GM12878 (cell line): ENCODE measurements at regions of chr11 and their contacts with region 1.

Region 1: GRCh38 chr11:44095506-44096394 is at the start of gene EXT2:
- DNase-seq: no peak
- ATAC-seq: peak; percentile 96
- H3K4me3 ChIP-seq: peak within 1 kb of the TSS; percentile 85
- H3K27ac ChIP-seq: no peak within 1 kb of the TSS
- H3K4me1 ChIP-seq: no peaks in the 10 kb centered on the region; the same call in 1 of the 2 replicates
- H3K27me3 ChIP-seq: no peaks in the 10 kb centered on the region; a peak in 1 of 4 replicates
- CTCF ChIP-seq: peak; percentile 87 to 93 (median 92)
- EP300 ChIP-seq: no peak
- POLR2A ChIP-seq: peak; percentile 77
- RAD21 ChIP-seq: no peak
- polyA plus RNA-seq, gene EXT2: 3.8 to 6.6 TPM

Region 2: GRCh38 chr11:44065841-44066731 is 29.7 kb before region 1 on chr11 and contains the start of gene ACCS:
- CTCF ChIA-PET with region 1: interaction called, 77 read pairs
- POLR2A ChIA-PET with region 1: interaction called, 3 read pairs
- RAD21 ChIA-PET with region 1: interaction called, 3 read pairs
- SMC1A ChIA-PET with region 1: no interaction called
- in situ Hi-C with region 1: no loop called
- intact Hi-C with region 1: no loop called
- DNase-seq: peak; percentile 70
- ATAC-seq: peak; percentile 97
- H3K4me3 ChIP-seq: peak within 1 kb of the TSS; percentile 80
- H3K27ac ChIP-seq: peak within 1 kb of the TSS; percentile 82
- H3K4me1 ChIP-seq: peaks cover 11% of the 10 kb centered on the region
- H3K27me3 ChIP-seq: no peaks in the 10 kb centered on the region
- CTCF ChIP-seq: peak; percentile 85 to 86 (median 86)
- EP300 ChIP-seq: no peak
- POLR2A ChIP-seq: peak; percentile 86
- RAD21 ChIP-seq: no peak
- polyA plus RNA-seq, gene ACCS: 4.8 to 5.4 TPM

Region 3: DNA sequence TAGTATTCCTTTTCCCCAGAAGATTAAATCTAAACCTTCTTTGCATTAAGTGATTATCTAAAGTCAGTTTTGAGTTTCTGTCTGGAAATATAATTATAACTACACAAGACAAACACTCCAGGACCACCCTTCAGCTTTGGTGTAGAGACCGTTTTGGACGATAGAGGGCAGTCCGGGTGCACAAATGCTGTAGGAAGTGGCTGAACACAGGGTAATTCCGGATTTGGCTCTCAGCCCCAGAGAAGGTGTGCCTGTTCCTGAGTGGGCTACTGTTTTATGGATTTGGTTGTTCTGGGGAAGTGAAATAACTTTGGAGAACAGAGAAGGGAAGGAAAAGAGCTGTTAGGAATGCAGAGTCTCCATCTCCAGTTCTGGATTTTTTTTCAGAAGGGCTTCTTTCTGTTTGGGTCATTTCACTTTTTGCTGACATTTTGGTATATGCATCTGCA is 14.5 kb after region 1 on chr11:
- CTCF ChIA-PET with region 1: interaction called, 107 read pairs
- POLR2A ChIA-PET with region 1: interaction called, 3 read pairs
- RAD21 ChIA-PET with region 1: interaction called, 5 read pairs
- SMC1A ChIA-PET with region 1: interaction called, 36 read pairs
- in situ Hi-C with region 1: no loop called
- intact Hi-C with region 1: no loop called
- DNase-seq: no peak
- ATAC-seq: peak; percentile 98
- H3K4me3 ChIP-seq: no peak overlapping the region
- H3K27ac ChIP-seq: 0 out of 2 replicates have a peak overlapping the region, but pooled peaks have one; percentile 22
- H3K4me1 ChIP-seq: peaks cover 8% of the 10 kb centered on the region
- H3K27me3 ChIP-seq: no peaks in the 10 kb centered on the region
- CTCF ChIP-seq: peak; percentile 85 to 94 (median 90)
- EP300 ChIP-seq: no peak
- POLR2A ChIP-seq: no peak
- RAD21 ChIP-seq: peak; percentile 90

Region 4: GRCh38 chr11:44133335-44133946 is 37.7 kb after region 1 on chr11:
- CTCF ChIA-PET with region 1: interaction called, 21 read pairs
- POLR2A ChIA-PET with region 1: no interaction called
- RAD21 ChIA-PET with region 1: interaction called, 5 read pairs
- SMC1A ChIA-PET with region 1: no interaction called
- in situ Hi-C with region 1: no loop called
- intact Hi-C with region 1: no loop called
- DNase-seq: no peak
- ATAC-seq: peak; percentile 55; the same call in 2 of the 3 replicates
- H3K4me3 ChIP-seq: no peak overlapping the region
- H3K27ac ChIP-seq: no peak overlapping the region
- H3K4me1 ChIP-seq: no peaks in the 10 kb centered on the region
- H3K27me3 ChIP-seq: no peaks in the 10 kb centered on the region
- CTCF ChIP-seq: peak; percentile 52 to 63 (median 59)
- EP300 ChIP-seq: no peak
- POLR2A ChIP-seq: no peak
- RAD21 ChIP-seq: peak; percentile 52

Region 5: GRCh38 chr11:44171518-44171917 is 75.8 kb after region 1 on chr11:
- CTCF ChIA-PET with region 1: no interaction called
- POLR2A ChIA-PET with region 1: no interaction called
- RAD21 ChIA-PET with region 1: no interaction called
- SMC1A ChIA-PET with region 1: no interaction called
- in situ Hi-C with region 1: no loop called
- intact Hi-C with region 1: no loop called
- DNase-seq: no peak
- ATAC-seq: no peak
- H3K4me3 ChIP-seq: no peak overlapping the region
- H3K27ac ChIP-seq: no peak overlapping the region
- H3K4me1 ChIP-seq: no peaks in the 10 kb centered on the region
- H3K27me3 ChIP-seq: no peaks in the 10 kb centered on the region
- CTCF ChIP-seq: no peak
- EP300 ChIP-seq: no peak
- POLR2A ChIP-seq: no peak
- RAD21 ChIP-seq: no peak

Region 6: DNA sequence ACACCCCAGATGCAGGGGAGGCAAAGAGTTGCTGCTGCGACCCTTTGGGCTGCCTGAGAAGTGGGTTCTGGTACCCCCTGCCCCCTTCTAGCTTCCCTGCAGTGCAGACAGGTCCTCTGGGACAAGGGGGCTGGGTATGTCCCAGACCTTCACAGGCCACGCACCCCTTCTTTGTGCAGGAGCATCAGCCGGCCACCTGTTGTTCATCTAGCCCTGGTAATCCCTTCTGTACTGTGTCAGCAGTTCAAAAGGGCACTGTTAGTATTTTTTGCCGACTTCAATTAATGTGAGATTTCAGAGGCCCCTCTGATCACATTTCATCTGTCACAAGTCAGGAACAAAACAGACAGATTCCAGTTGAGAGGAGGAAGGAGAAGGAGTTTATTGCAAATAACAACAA is 164.3 kb after region 1 on chr11:
- CTCF ChIA-PET with region 1: no interaction called
- POLR2A ChIA-PET with region 1: no interaction called
- RAD21 ChIA-PET with region 1: no interaction called
- SMC1A ChIA-PET with region 1: no interaction called
- in situ Hi-C with region 1: no loop called
- intact Hi-C with region 1: no loop called
- DNase-seq: no peak
- ATAC-seq: no peak
- H3K4me3 ChIP-seq: no peak overlapping the region
- H3K27ac ChIP-seq: no peak overlapping the region
- H3K4me1 ChIP-seq: peaks cover 4% of the 10 kb centered on the region
- H3K27me3 ChIP-seq: no peaks in the 10 kb centered on the region
- CTCF ChIP-seq: no peak
- EP300 ChIP-seq: no peak
- POLR2A ChIP-seq: no peak
- RAD21 ChIP-seq: no peak

Region 7: DNA sequence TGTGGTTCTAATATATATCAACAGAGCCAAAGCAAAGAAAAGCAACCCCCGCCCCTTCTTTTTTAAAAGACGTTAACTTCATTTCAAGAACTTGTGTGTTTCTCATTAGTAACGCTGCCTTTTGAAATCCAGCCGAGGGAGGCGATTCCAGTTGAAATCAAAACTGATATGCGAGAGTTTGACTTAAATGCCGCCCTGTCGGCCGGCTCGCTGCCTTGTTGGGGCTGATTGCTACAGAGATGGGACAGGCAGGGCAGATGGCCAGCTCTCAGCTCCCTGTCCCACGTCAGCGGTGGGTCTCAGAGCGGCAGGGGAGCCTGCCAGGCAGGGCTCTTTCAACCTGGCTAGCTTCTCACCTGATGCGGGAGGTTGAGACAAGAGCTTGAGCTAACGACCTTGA is 266.1 kb after region 1 on chr11:
- CTCF ChIA-PET with region 1: no interaction called
- POLR2A ChIA-PET with region 1: no interaction called
- RAD21 ChIA-PET with region 1: no interaction called
- SMC1A ChIA-PET with region 1: no interaction called
- in situ Hi-C with region 1: no loop called
- intact Hi-C with region 1: no loop called
- DNase-seq: no peak
- ATAC-seq: no peak
- H3K4me3 ChIP-seq: no peak overlapping the region
- H3K27ac ChIP-seq: no peak overlapping the region
- H3K4me1 ChIP-seq: no peaks in the 10 kb centered on the region
- H3K27me3 ChIP-seq: peaks cover 0 to 5% of the 10 kb centered on the region in 2 experiments; a peak in 2 of 4 replicates
- CTCF ChIP-seq: no peak
- EP300 ChIP-seq: no peak
- POLR2A ChIP-seq: no peak
- RAD21 ChIP-seq: no peak

Region 8: GRCh38 chr11:44427432-44427831 is 331.7 kb after region 1 on chr11:
- CTCF ChIA-PET with region 1: no interaction called
- POLR2A ChIA-PET with region 1: no interaction called
- RAD21 ChIA-PET with region 1: no interaction called
- SMC1A ChIA-PET with region 1: no interaction called
- in situ Hi-C with region 1: no loop called
- intact Hi-C with region 1: no loop called
- DNase-seq: no peak
- ATAC-seq: no peak
- H3K4me3 ChIP-seq: no peak overlapping the region
- H3K27ac ChIP-seq: no peak overlapping the region
- H3K4me1 ChIP-seq: no peaks in the 10 kb centered on the region
- H3K27me3 ChIP-seq: no peaks in the 10 kb centered on the region
- CTCF ChIP-seq: peak in 2 of 3 experiments; percentile 30 to 33; a peak in 4 of 6 replicates
- EP300 ChIP-seq: no peak
- POLR2A ChIP-seq: no peak
- RAD21 ChIP-seq: no peak

Region 9: DNA sequence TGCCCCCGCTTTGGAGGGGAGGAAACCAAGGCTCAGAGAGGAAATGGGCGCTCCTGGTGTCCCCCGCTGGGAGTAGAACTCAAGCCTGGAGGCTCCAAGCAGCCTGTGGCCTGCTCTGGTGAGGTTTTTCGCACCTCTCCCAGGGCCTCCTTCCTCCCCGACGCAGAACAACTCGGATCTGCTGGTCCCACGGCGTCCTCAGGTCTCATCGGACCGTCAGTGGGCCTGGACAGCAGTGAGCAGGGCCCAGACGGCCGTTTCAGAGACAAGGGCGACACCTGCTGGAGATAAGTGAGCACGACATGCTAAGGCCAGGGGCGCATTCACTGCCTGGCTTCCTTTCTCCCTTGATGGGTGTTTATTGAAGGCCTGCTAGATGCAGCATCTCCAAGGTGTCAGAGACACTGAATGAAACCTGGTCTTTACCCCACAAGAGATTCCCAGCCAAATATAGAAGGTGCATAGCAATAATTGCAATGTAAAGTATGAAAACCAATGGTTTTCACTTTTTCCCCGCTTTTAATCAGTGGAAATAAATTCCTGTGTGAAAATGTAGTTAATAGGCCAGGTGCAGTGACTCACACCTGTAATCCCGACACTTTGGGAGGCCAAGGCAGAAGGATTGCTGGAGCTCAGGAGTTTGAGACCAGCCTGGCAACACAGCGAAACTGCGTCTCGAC is 442.8 kb after region 1 on chr11:
- CTCF ChIA-PET with region 1: interaction called, 13 read pairs
- POLR2A ChIA-PET with region 1: no interaction called
- RAD21 ChIA-PET with region 1: interaction called, 4 read pairs
- SMC1A ChIA-PET with region 1: no interaction called
- in situ Hi-C with region 1: loop called (anchors 5 kb)
- intact Hi-C with region 1: loop called (anchors 1 kb)
- DNase-seq: no peak
- ATAC-seq: peak; percentile 99
- H3K4me3 ChIP-seq: no peak overlapping the region
- H3K27ac ChIP-seq: no peak overlapping the region
- H3K4me1 ChIP-seq: no peaks in the 10 kb centered on the region
- H3K27me3 ChIP-seq: peaks cover 0 to 1% of the 10 kb centered on the region in 2 experiments; a peak in 3 of 4 replicates
- CTCF ChIP-seq: peak; percentile 94 to 96 (median 96); a peak in 5 of 6 replicates
- EP300 ChIP-seq: no peak
- POLR2A ChIP-seq: no peak
- RAD21 ChIP-seq: peak; percentile 90